ENCODE measurements at regions of chr11 and their contacts with region 1.

Region 1: GRCh38 chr11:17384002-17384511 is 4.4 kb downstream of the KCNJ11 start:
- DNase-seq: peak; percentile 81
- H3K4me3 Mint-ChIP-seq: no peak overlapping the region
- H3K27ac Mint-ChIP-seq: no peak overlapping the region
- H3K4me1 Mint-ChIP-seq: no peaks in the 10 kb centered on the region
- H3K27me3 Mint-ChIP-seq: peaks cover 4% of the 10 kb centered on the region

Region 2: GRCh38 chr11:17268902-17269301 is 115.2 kb before region 1 on chr11:
- CTCF ChIA-PET with region 1: no interaction called
- POLR2A ChIA-PET with region 1: no interaction called
- intact Hi-C with region 1: no loop called
- DNase-seq: no peak
- H3K4me3 Mint-ChIP-seq: no peak overlapping the region
- H3K27ac Mint-ChIP-seq: no peak overlapping the region
- H3K4me1 Mint-ChIP-seq: peaks cover 11% of the 10 kb centered on the region
- H3K27me3 Mint-ChIP-seq: peaks cover 5% of the 10 kb centered on the region

Region 3: DNA sequence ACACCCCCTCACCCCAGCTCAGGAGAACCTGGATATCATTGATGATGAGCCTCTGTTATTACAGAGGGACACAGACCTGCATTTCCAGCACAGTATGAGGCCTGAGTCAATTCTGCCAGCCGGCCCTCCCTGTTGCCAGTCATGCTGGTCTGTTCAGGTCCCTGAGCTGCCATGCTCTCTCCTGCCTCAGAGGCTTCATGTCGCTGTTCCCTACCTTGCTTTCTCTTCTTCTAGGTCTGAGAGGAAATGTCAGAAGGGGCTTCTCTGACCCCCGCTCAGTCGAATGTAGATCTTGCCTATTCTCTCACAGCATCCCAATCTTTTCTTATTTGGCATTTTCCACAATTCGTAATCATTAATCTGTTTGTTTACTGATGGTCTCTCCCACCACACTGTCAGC is 114.4 kb after region 1 on chr11:
- CTCF ChIA-PET with region 1: interaction called, 103 read pairs
- POLR2A ChIA-PET with region 1: no interaction called
- intact Hi-C with region 1: no loop called
- DNase-seq: no peak
- H3K4me3 Mint-ChIP-seq: no peak overlapping the region
- H3K27ac Mint-ChIP-seq: no peak overlapping the region
- H3K4me1 Mint-ChIP-seq: no peaks in the 10 kb centered on the region
- H3K27me3 Mint-ChIP-seq: peaks cover 3% of the 10 kb centered on the region

Region 4: GRCh38 chr11:17513853-17514252 is 129.8 kb after region 1 on chr11:
- CTCF ChIA-PET with region 1: interaction called, 103 read pairs
- POLR2A ChIA-PET with region 1: no interaction called
- intact Hi-C with region 1: no loop called
- DNase-seq: peak; percentile 24
- H3K4me3 Mint-ChIP-seq: no peak overlapping the region
- H3K27ac Mint-ChIP-seq: no peak overlapping the region
- H3K4me1 Mint-ChIP-seq: no peaks in the 10 kb centered on the region
- H3K27me3 Mint-ChIP-seq: peaks cover 11% of the 10 kb centered on the region

Region 5: GRCh38 chr11:17528181-17528691 is 144.2 kb after region 1 on chr11:
- CTCF ChIA-PET with region 1: interaction called, 75 read pairs
- POLR2A ChIA-PET with region 1: no interaction called
- intact Hi-C with region 1: loop called (anchors 1 kb)
- DNase-seq: peak; percentile 69
- H3K4me3 Mint-ChIP-seq: no peak overlapping the region
- H3K27ac Mint-ChIP-seq: no peak overlapping the region
- H3K4me1 Mint-ChIP-seq: no peaks in the 10 kb centered on the region
- H3K27me3 Mint-ChIP-seq: peaks cover 9% of the 10 kb centered on the region

Region 6: DNA sequence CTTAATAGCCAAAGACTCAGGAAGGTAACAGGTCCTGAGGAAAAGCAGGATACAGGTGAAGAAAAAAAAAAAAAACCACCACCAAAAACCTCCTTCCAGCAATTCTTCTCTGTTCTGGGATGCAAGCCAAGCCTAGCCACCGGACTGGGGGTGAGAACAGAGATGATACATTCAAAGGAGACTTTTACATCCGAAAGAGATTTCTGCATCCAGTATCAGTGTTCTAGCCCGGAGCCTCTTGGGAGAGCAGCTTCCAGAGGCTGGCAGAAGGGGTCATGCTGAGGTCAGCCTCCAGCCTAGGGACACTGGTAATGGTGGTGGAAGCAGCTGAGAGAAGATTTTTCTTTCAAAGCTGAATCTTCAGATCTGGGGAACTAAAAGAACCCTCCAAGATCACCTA is 426.7 kb after region 1 on chr11:
- CTCF ChIA-PET with region 1: no interaction called
- POLR2A ChIA-PET with region 1: no interaction called
- intact Hi-C with region 1: no loop called
- DNase-seq: no peak
- H3K4me3 Mint-ChIP-seq: no peak overlapping the region
- H3K27ac Mint-ChIP-seq: no peak overlapping the region
- H3K4me1 Mint-ChIP-seq: no peaks in the 10 kb centered on the region
- H3K27me3 Mint-ChIP-seq: no peaks in the 10 kb centered on the region

Region 7: GRCh38 chr11:18000760-18001159 is 616.7 kb after region 1 on chr11:
- CTCF ChIA-PET with region 1: no interaction called
- POLR2A ChIA-PET with region 1: no interaction called
- intact Hi-C with region 1: no loop called
- DNase-seq: no peak
- H3K4me3 Mint-ChIP-seq: no peak overlapping the region
- H3K27ac Mint-ChIP-seq: no peak overlapping the region
- H3K4me1 Mint-ChIP-seq: no peaks in the 10 kb centered on the region
- H3K27me3 Mint-ChIP-seq: no peaks in the 10 kb centered on the region

Measured in activated CD4-positive, alpha-beta memory T cell treated with anti-CD3 and anti-CD28 coated beads for 36 hours (primary cell).